ENCODE measurements at regions of chr4 and their contacts with region 1.

Region 1: GRCh38 chr4:15231265-15232091 is 196.4 kb upstream of the C1QTNF7 start:
- DNase-seq: peak; percentile 53 to 80 (median 60)
- ATAC-seq: peak; percentile 98
- H3K4me3 ChIP-seq: no peak overlapping the region
- H3K27ac ChIP-seq: no peak overlapping the region
- H3K4me1 ChIP-seq: no peaks in the 10 kb centered on the region
- H3K27me3 ChIP-seq: peaks cover 0 to 7% of the 10 kb centered on the region in 2 experiments; a peak in 1 of 5 replicates
- CTCF ChIP-seq: peak; percentile 64 to 86 (median 83)
- EP300 ChIP-seq: no peak
- POLR2A ChIP-seq: no peak
- RAD21 ChIP-seq: peak; percentile 47 to 75; a peak in 3 of 4 replicates

Region 2: DNA sequence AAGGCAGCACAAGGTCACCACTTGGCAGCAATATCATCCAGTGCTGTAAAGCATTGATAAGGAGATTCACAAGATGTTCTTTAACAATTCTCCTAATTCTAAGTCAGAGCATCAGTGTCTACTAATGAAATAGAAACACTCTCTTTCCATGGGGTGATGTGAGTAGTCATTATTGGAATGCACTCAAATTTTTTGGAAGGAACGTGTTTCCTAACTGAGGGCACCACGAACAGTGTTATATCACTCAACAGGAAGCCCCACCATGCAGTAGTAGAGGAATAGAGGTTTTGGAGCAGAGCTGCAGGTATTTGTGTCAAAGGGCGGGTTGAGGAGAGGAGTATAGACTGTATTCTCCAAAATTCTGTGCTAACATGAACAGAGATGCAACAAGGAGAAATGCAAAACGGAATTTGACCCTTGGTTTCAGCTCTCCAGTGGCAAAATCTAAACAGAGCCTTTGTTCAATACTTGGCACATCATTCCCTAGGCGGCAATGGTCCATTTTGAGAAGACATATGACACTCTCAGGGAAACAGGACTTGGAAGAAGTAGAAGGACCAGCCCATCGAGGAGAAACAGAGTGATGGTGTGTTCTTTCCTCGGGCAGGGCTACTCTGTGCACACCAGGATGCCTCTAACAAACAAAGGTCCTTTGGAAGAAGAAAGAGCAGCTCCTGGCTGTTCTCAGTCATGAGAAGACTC is 130.3 kb before region 1 on chr4:
- CTCF ChIA-PET with region 1: no interaction called
- POLR2A ChIA-PET with region 1: no interaction called
- in situ Hi-C with region 1: no loop called
- intact Hi-C with region 1: no loop called
- DNase-seq: no peak
- ATAC-seq: no peak
- H3K4me3 ChIP-seq: no peak overlapping the region
- H3K27ac ChIP-seq: no peak overlapping the region
- H3K4me1 ChIP-seq: no peaks in the 10 kb centered on the region
- H3K27me3 ChIP-seq: no peaks in the 10 kb centered on the region
- CTCF ChIP-seq: no peak
- EP300 ChIP-seq: no peak
- POLR2A ChIP-seq: no peak
- RAD21 ChIP-seq: no peak

Region 3: GRCh38 chr4:15396157-15396800 is 164.8 kb after region 1 on chr4:
- CTCF ChIA-PET with region 1: no interaction called
- POLR2A ChIA-PET with region 1: no interaction called
- in situ Hi-C with region 1: loop called (anchors 10 kb)
- intact Hi-C with region 1: no loop called
- DNase-seq: peak; percentile 62 to 65 (median 64)
- ATAC-seq: peak; percentile 94
- H3K4me3 ChIP-seq: no peak overlapping the region
- H3K27ac ChIP-seq: no peak overlapping the region
- H3K4me1 ChIP-seq: no peaks in the 10 kb centered on the region
- H3K27me3 ChIP-seq: no peaks in the 10 kb centered on the region
- CTCF ChIP-seq: peak; percentile 74 to 76 (median 75)
- EP300 ChIP-seq: no peak
- POLR2A ChIP-seq: no peak
- RAD21 ChIP-seq: peak; percentile 41 to 70; a peak in 3 of 4 replicates

Region 4: GRCh38 chr4:15457406-15458201 is 226.1 kb after region 1 on chr4:
- CTCF ChIA-PET with region 1: interaction called, 3 read pairs
- POLR2A ChIA-PET with region 1: no interaction called
- in situ Hi-C with region 1: loop called (anchors 10 kb)
- intact Hi-C with region 1: no loop called
- DNase-seq: peak; percentile 27 to 37 (median 30)
- ATAC-seq: peak; percentile 86
- H3K4me3 ChIP-seq: no peak overlapping the region
- H3K27ac ChIP-seq: no peak overlapping the region
- H3K4me1 ChIP-seq: no peaks in the 10 kb centered on the region
- H3K27me3 ChIP-seq: no peaks in the 10 kb centered on the region
- CTCF ChIP-seq: peak; percentile 42 to 79 (median 66); a peak in 5 of 6 replicates
- EP300 ChIP-seq: no peak
- POLR2A ChIP-seq: no peak
- RAD21 ChIP-seq: peak; percentile 64 to 77

Region 5: GRCh38 chr4:15655229-15656037 is 424.0 kb after region 1 on chr4 and contains the start of gene FBXL5:
- CTCF ChIA-PET with region 1: no interaction called
- POLR2A ChIA-PET with region 1: no interaction called
- in situ Hi-C with region 1: no loop called
- intact Hi-C with region 1: loop called (anchors 10 kb)
- DNase-seq: peak; percentile 88 to 97 (median 96)
- ATAC-seq: peak; percentile 49
- H3K4me3 ChIP-seq: peak within 1 kb of the TSS; percentile 84
- H3K27ac ChIP-seq: peak within 1 kb of the TSS; percentile 98
- H3K4me1 ChIP-seq: peaks cover 13 to 16% of the 10 kb centered on the region in 2 experiments
- H3K27me3 ChIP-seq: no peaks in the 10 kb centered on the region
- CTCF ChIP-seq: no peak
- EP300 ChIP-seq: no peak
- POLR2A ChIP-seq: peak; percentile 78
- RAD21 ChIP-seq: no peak
- polyA plus RNA-seq, gene FBXL5: 6.0 to 10.8 TPM

Measured in K562 (cell line).